IMR-90 (cell line): ENCODE measurements at regions of chr12 and their contacts with region 1.

Region 1: GRCh38 chr12:49331380-49332222 is 5.4 kb downstream of the C1QL4 start:
- DNase-seq: peak; percentile 76
- ATAC-seq: peak; percentile 98
- H3K4me3 ChIP-seq: no peak overlapping the region
- H3K27ac ChIP-seq: no peak overlapping the region
- H3K4me1 ChIP-seq: no peaks in the 10 kb centered on the region
- H3K27me3 ChIP-seq: peaks cover 24% of the 10 kb centered on the region
- CTCF ChIP-seq: peak; percentile 91
- POLR2A ChIP-seq: no peak
- RAD21 ChIP-seq: peak; percentile 93

Region 2: DNA sequence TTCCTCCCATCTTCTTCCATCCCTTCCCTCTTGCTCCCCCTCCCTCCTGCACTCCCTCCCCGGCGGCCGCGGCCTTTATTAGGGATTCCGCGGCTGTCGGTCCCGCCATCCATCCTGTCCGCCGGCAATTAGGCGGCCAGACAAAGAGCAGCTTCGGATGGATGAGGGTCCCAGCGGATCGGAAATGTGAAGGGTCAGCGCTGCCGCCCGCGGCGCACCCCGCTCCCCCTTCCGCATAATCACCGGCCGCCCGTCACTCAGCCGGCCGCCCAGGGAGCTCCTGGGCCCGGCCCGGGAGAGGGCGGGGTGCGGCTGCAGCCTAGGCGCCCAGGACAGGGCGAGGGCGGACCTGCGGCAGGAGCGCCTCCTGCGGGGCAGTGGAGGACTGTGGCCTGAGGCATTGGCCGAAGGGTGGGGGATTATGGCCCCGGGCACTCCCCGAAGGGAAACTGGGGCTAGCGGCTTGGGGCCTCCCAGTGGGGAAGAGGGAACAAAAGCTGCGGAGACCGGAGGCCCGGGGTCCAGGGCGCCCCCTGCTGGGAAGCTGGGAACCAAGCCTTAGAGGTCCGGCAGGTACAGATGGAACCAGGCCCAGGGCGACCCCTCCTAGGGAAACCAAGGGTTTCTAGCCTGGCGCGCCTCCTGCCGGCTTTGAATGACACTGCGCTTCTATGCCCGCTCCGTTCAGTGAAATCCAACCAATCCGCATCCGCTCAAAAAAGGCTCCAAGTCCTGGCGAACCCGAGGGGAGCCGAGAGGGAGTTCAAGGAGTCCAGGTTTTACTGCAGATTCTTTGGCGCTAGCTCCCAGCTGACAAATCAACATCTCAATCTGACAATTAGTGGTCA is 10.7 kb after region 1 on chr12:
- CTCF ChIA-PET with region 1: interaction called, 24 read pairs
- POLR2A ChIA-PET with region 1: no interaction called
- dilution Hi-C with region 1: no loop called
- in situ Hi-C with region 1: no loop called
- intact Hi-C with region 1: no loop called
- DNase-seq: peak; percentile 66
- ATAC-seq: peak; percentile 83
- H3K4me3 ChIP-seq: peak overlapping the region; percentile 33
- H3K27ac ChIP-seq: no peak overlapping the region
- H3K4me1 ChIP-seq: peaks cover 17% of the 10 kb centered on the region
- H3K27me3 ChIP-seq: peaks cover 88% of the 10 kb centered on the region
- CTCF ChIP-seq: peak; percentile 69
- POLR2A ChIP-seq: no peak
- RAD21 ChIP-seq: peak; percentile 47

Region 3: DNA sequence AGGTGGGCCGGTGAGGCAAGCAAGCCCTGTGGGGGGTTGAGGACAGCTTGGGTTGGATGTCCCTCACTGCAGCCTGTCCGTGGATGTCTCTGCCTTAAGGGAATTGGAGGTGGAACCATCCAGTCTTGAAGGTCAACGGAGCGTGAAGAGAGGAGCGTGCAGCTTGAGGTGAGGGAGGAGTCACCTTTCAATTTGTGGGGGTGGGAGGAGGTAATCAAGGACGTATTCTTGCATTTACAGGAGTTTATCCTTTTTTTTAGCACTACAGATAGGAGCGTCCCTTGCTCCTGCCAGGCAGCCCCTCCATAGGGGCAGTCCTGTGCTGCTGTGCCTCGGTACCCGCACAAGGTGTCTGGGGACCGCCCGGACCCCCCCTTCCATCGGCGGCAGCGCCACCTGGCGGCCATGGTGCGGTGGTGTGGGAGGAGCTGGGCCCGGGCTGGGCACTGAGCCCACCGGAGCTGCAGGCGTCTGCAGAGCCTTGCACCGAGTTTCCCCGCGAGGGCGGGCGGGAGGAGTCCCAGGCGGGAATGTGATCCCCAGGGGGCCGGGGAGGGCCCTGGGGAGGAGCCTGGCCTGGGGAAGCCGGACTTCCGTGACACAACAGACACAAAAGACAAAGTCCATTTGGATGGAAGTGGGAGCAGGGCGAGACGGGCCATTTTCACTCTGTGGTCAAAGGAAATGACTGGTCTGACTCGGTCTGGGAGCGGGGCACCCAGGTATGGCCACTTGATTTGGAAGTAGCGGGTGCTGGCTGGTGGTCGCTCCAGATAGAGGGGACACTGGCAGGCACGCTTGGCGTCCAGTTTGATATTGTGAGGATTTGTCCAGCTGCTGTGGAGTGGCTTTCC is 16.0 kb after region 1 on chr12:
- CTCF ChIA-PET with region 1: interaction called, 24 read pairs
- POLR2A ChIA-PET with region 1: no interaction called
- dilution Hi-C with region 1: no loop called
- in situ Hi-C with region 1: no loop called
- intact Hi-C with region 1: no loop called
- DNase-seq: peak; percentile 89
- ATAC-seq: peak; percentile 89
- H3K4me3 ChIP-seq: peak overlapping the region; percentile 47
- H3K27ac ChIP-seq: peak overlapping the region; percentile 2; the same call in 1 of the 2 replicates
- H3K4me1 ChIP-seq: peaks cover 20% of the 10 kb centered on the region
- H3K27me3 ChIP-seq: peaks cover 42% of the 10 kb centered on the region
- CTCF ChIP-seq: peak; percentile 83
- POLR2A ChIP-seq: peak; percentile 74
- RAD21 ChIP-seq: peak; percentile 30; the same call in 1 of the 2 replicates

Region 4: DNA sequence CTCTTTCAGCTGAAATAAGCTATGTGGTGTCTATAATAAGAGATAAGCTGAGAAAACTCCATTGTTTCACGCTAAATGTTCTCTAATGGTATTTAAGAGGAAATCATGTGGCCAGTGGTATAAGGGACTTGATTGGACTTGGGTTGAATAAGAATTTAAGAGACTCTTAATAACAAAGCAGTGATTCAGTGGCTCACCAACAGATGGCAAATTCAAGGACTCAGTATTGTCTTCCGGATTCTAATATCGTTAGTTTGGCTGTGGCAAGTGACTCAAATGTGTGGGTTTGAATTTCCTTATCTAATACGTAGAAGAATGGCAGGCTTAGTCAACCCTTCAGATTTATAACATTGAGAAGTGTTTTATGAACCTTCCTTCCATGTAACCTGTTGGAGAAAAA is 158.1 kb after region 1 on chr12:
- CTCF ChIA-PET with region 1: no interaction called
- POLR2A ChIA-PET with region 1: no interaction called
- dilution Hi-C with region 1: no loop called
- in situ Hi-C with region 1: no loop called
- intact Hi-C with region 1: no loop called
- DNase-seq: peak; percentile 92
- ATAC-seq: peak; percentile 76
- H3K4me3 ChIP-seq: no peak overlapping the region
- H3K27ac ChIP-seq: no peak overlapping the region
- H3K4me1 ChIP-seq: peaks cover 2% of the 10 kb centered on the region; the same call in 1 of the 2 replicates
- H3K27me3 ChIP-seq: no peaks in the 10 kb centered on the region
- CTCF ChIP-seq: peak; percentile 48
- POLR2A ChIP-seq: no peak
- RAD21 ChIP-seq: peak; percentile 32

Region 5: DNA sequence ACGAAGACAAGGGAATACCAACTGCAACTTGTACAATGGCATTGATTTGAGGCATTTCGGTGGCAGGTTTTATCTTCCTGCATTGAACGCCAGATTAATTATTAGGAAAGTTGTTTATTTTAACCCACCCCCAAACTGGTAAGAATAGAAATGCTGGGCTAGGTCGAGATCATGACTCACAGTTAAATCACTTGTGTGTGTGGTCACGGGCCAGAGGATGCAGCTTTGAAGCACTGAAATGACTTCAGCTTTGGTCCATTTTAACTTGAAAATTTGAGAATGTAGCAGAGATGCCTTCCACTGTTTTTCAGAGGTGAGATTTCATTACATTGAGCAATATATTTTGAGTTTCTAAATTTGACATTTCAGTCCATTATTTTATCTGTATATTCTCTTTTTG is 183.7 kb after region 1 on chr12:
- CTCF ChIA-PET with region 1: interaction called, 6 read pairs
- POLR2A ChIA-PET with region 1: no interaction called
- dilution Hi-C with region 1: no loop called
- in situ Hi-C with region 1: no loop called
- intact Hi-C with region 1: loop called (anchors 1 kb)
- DNase-seq: peak; percentile 90
- ATAC-seq: peak; percentile 86
- H3K4me3 ChIP-seq: no peak overlapping the region
- H3K27ac ChIP-seq: no peak overlapping the region
- H3K4me1 ChIP-seq: peaks cover 5% of the 10 kb centered on the region
- H3K27me3 ChIP-seq: no peaks in the 10 kb centered on the region
- CTCF ChIP-seq: no peak
- POLR2A ChIP-seq: no peak
- RAD21 ChIP-seq: no peak

Region 6: DNA sequence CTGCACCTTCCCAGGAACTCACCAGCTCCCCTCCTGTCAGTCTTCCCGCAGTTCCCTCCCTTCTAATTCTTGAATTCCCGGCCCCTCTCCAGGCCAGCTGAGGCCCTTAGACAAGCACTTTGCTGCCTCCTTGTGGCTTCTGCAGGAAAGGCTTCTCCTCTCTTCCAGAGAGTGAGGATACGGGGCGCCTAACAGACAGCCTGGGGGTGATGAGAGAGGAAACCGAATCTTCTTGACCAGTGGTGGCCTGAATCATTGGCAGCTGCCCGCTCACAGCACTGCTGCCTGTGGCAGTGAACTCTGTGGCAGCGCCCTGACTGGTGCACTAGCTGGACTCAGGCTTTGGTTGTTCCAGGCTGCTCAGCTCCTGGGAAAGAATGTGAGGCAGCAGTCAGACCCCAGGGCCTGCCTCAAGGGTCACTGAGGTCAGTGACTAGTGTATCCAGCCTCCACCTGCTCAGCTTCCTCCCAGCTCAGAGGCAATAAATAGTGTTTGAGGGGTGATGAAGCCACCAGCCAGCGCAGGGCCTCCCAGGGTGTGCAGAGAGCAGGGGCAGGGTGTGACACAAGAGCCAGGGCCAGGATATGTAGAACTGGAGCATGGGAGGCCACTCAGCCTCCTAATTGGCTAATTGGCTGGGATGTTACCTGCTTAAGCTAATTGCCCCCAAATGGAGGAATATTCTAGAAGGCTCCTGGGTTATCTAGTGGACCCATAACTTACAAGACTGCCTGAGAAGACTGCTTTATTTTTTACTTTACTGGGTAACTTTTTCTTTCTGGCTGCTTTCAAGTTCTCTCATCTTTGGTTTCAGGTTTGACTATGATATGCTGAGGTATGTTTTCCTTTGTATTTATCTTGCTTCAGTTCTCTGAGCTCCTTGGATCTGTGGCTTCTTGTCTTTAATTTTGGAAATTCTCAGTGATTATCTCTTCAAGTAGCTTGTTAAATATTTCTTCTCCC is 249.3 kb after region 1 on chr12:
- CTCF ChIA-PET with region 1: interaction called, 12 read pairs
- POLR2A ChIA-PET with region 1: no interaction called
- dilution Hi-C with region 1: no loop called
- in situ Hi-C with region 1: no loop called
- intact Hi-C with region 1: loop called (anchors 2 kb)
- DNase-seq: peak; percentile 77
- ATAC-seq: peak; percentile 97
- H3K4me3 ChIP-seq: no peak overlapping the region
- H3K27ac ChIP-seq: no peak overlapping the region
- H3K4me1 ChIP-seq: peaks cover 2% of the 10 kb centered on the region; the same call in 1 of the 2 replicates
- H3K27me3 ChIP-seq: no peaks in the 10 kb centered on the region
- CTCF ChIP-seq: peak; percentile 84
- POLR2A ChIP-seq: no peak
- RAD21 ChIP-seq: peak; percentile 89